PC-9 (cell line): ENCODE measurements at regions of chr15 and their contacts with region 1.

Region 1: DNA sequence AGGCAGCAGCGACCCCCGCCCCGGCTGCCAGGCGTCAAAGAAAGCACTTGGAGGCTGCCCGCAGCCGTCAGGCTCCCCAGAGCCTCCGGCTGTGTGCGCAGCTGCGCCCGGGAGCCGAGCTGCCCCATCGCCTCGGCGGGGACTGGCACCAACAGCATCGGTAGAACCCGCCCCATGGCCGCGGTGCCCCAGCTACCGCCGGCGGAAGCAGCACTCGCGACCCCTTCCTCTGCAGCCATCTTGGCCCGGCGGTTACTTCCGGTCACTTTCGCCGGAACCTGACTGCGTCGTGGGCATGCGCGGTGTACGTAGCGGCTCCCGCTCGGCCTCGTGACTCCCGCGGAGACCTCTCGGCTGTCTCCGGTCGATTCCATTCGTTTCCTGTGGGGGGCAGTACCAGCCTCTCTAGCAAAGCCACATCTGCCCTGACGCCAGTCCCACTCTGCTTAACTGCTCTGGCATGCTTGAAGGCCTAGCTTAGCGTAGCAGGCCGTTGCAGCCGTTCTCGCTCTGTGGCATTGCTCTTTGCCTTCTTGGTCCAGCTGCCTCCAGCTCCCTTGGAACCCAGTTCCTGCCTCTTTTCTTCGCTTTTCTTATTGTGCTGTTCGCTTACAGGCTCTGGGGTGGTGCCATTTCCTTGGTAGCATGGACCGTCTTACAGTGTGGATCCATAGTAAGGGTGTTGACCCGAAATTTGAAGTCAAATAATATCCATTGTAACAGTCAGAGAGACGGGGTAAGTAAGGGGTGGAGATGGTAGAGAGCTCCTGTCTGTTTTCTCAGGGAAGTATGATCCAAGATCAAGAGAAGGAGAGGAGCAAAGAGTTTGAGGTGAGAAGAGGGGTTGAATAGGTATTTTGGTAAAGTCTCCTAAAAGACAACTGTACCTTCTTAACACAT is at the start of gene SPG11:
- DNase-seq: peak; percentile 87 to 96
- H3K4me3 ChIP-seq: peak within 1 kb of the TSS; percentile 75
- H3K27ac ChIP-seq: peak within 1 kb of the TSS; percentile 78
- H3K4me1 ChIP-seq: peaks cover 13% of the 10 kb centered on the region
- H3K27me3 ChIP-seq: no peaks in the 10 kb centered on the region
- CTCF ChIP-seq: peak; percentile 80
- total RNA-seq, gene SPG11: 63.2 and 64.2 TPM in 2 replicates

Region 2: DNA sequence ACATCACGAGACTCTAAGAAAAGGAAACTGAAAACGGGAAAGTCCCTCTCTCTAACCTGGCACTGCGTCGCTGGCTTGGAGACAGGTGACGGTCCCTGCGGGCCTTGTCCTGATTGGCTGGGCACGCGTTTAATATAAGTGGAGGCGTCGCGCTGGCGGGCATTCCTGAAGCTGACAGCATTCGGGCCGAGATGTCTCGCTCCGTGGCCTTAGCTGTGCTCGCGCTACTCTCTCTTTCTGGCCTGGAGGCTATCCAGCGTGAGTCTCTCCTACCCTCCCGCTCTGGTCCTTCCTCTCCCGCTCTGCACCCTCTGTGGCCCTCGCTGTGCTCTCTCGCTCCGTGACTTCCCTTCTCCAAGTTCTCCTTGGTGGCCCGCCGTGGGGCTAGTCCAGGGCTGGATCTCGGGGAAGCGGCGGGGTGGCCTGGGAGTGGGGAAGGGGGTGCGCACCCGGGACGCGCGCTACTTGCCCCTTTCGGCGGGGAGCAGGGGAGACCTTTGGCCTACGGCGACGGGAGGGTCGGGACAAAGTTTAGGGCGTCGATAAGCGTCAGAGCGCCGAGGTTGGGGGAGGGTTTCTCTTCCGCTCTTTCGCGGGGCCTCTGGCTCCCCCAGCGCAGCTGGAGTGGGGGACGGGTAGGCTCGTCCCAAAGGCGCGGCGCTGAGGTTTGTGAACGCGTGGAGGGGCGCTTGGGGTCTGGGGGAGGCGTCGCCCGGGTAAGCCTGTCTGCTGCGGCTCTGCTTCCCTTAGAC is 47.9 kb after region 1 on chr15 and contains the start of gene B2M:
- CTCF ChIA-PET with region 1: interaction called, 8 read pairs
- POLR2A ChIA-PET with region 1: interaction called, 7 read pairs
- intact Hi-C with region 1: loop called (anchors 1 kb)
- DNase-seq: peak; percentile 88 to 95
- H3K4me3 ChIP-seq: peak within 1 kb of the TSS; percentile 94
- H3K27ac ChIP-seq: peak within 1 kb of the TSS; percentile 53
- H3K4me1 ChIP-seq: peaks cover 18% of the 10 kb centered on the region
- H3K27me3 ChIP-seq: no peaks in the 10 kb centered on the region
- CTCF ChIP-seq: no peak
- total RNA-seq, gene B2M: 606 and 685 TPM in 2 replicates

Region 3: GRCh38 chr15:44753345-44753744 is 89.7 kb after region 1 on chr15:
- CTCF ChIA-PET with region 1: no interaction called
- POLR2A ChIA-PET with region 1: no interaction called
- intact Hi-C with region 1: no loop called
- DNase-seq: no peak
- H3K4me3 ChIP-seq: no peak overlapping the region
- H3K27ac ChIP-seq: no peak overlapping the region
- H3K4me1 ChIP-seq: no peaks in the 10 kb centered on the region
- H3K27me3 ChIP-seq: no peaks in the 10 kb centered on the region
- CTCF ChIP-seq: no peak

Region 4: GRCh38 chr15:44836094-44836493 is 172.4 kb after region 1 on chr15:
- CTCF ChIA-PET with region 1: no interaction called
- POLR2A ChIA-PET with region 1: no interaction called
- intact Hi-C with region 1: loop called (anchors 5 kb)
- DNase-seq: peak; percentile 62 to 67
- H3K4me3 ChIP-seq: no peak overlapping the region
- H3K27ac ChIP-seq: 0 out of 2 replicates have a peak overlapping the region, but pooled peaks have one; percentile 16
- H3K4me1 ChIP-seq: peaks cover 3% of the 10 kb centered on the region; the same call in 1 of the 2 replicates
- H3K27me3 ChIP-seq: no peaks in the 10 kb centered on the region
- CTCF ChIP-seq: no peak

Region 5: GRCh38 chr15:45549541-45550220 is 886.0 kb after region 1 on chr15:
- CTCF ChIA-PET with region 1: no interaction called
- POLR2A ChIA-PET with region 1: no interaction called
- intact Hi-C with region 1: no loop called
- DNase-seq: peak in 1 of 2 experiments; percentile 52
- H3K4me3 ChIP-seq: no peak overlapping the region
- H3K27ac ChIP-seq: no peak overlapping the region
- H3K4me1 ChIP-seq: no peaks in the 10 kb centered on the region
- H3K27me3 ChIP-seq: no peaks in the 10 kb centered on the region
- CTCF ChIP-seq: no peak